CD8-positive, alpha-beta T cell (primary cell): ENCODE measurements at regions of chr2 and their contacts with region 1.

Region 1: GRCh38 chr2:189466660-189467059 is 25.4 kb downstream of the WDR75 start:
- DNase-seq: peak in 2 of 9 experiments; percentile 14 to 26
- ATAC-seq: peak; percentile 51
- H3K4me3 ChIP-seq: no peak overlapping the region
- H3K4me3 Mint-ChIP-seq: no peak overlapping the region
- H3K27ac ChIP-seq: no peak overlapping the region
- H3K27ac Mint-ChIP-seq: no peak overlapping the region
- H3K4me1 ChIP-seq: no peaks in the 10 kb centered on the region
- H3K4me1 Mint-ChIP-seq: no peaks in the 10 kb centered on the region
- H3K27me3 ChIP-seq: no peaks in the 10 kb centered on the region
- H3K27me3 Mint-ChIP-seq: no peaks in the 10 kb centered on the region
- CTCF ChIP-seq: no peak

Region 2: DNA sequence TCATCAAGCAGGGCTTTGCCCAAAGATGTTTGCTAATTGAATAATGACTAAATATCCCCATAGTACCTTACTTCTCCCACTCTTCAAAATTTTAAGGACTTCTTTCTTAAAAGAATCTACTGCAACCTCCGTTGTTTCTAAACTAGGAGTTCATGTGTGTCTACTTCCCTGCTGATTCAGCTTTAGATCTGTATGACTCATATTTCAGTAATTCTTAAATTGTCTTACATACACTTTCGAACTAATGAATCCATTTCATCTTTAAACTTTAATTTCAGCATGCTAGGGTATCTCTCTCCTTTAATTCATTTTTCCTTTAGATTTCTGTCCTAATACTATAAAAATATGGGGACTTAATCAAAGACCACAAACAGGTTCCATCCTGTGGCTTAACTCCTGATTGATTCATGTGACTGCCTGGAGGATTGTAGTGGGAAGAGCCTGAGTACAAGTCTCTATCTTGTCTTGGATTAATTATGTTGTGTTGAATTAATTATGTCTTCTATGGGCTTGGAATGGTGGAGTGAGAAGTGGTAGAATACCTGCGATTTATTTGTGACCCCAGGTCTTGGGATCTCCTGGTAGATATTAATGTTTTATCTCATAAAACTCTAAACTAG is 262.2 kb before region 1 on chr2:
- CTCF ChIA-PET with region 1: no interaction called
- POLR2A ChIA-PET with region 1: no interaction called
- intact Hi-C with region 1: no loop called
- DNase-seq: no peak
- ATAC-seq: no peak
- H3K4me3 ChIP-seq: no peak overlapping the region
- H3K4me3 Mint-ChIP-seq: no peak overlapping the region
- H3K27ac ChIP-seq: no peak overlapping the region
- H3K27ac Mint-ChIP-seq: no peak overlapping the region
- H3K4me1 ChIP-seq: no peaks in the 10 kb centered on the region
- H3K4me1 Mint-ChIP-seq: no peaks in the 10 kb centered on the region
- H3K27me3 ChIP-seq: no peaks in the 10 kb centered on the region
- H3K27me3 Mint-ChIP-seq: peaks cover 3% of the 10 kb centered on the region
- CTCF ChIP-seq: no peak

Region 3: GRCh38 chr2:189633392-189633811 is 166.7 kb after region 1 on chr2:
- CTCF ChIA-PET with region 1: no interaction called
- POLR2A ChIA-PET with region 1: no interaction called
- intact Hi-C with region 1: loop called (anchors 2 to 5 kb)
- DNase-seq: peak in 2 of 9 experiments; percentile 10 to 37
- ATAC-seq: no peak
- H3K4me3 ChIP-seq: no peak overlapping the region
- H3K4me3 Mint-ChIP-seq: no peak overlapping the region
- H3K27ac ChIP-seq: no peak overlapping the region
- H3K27ac Mint-ChIP-seq: no peak overlapping the region
- H3K4me1 ChIP-seq: no peaks in the 10 kb centered on the region
- H3K4me1 Mint-ChIP-seq: no peaks in the 10 kb centered on the region
- H3K27me3 ChIP-seq: no peaks in the 10 kb centered on the region
- H3K27me3 Mint-ChIP-seq: no peaks in the 10 kb centered on the region
- CTCF ChIP-seq: no peak

Region 4: DNA sequence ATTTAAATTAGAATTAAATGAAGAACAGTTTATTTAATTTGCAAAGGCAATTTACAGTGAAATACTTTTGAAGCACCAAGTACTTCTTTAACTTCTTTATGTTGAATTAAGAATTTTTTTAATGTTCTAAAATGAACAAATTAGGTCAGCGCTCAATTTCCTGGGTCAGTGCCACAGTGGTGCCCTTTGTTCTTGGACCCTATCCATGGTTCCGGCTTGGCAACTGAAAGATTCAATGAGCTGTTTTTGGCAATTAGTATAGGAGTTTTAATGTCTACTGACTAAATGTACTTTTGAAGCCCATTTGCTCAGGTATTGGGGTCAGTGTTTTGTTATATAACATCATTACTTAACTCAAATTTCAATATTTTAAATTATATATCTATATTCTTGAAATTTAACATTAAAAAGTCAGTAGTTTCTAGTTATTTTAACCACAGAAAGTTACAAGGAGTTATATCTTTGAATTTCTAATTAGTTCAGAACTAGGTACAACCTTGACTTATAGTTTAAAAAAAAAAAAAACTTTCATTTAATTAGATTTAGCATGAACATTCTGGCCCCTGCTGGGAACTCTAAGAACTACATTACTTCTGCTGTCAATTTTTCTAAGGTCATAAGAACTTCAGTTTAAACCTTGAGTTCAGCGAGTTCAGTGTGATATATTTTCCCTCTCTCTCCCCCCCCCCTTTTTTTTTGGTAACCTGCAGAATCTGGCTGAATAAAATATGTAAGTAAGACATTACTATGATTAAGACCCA is 603.5 kb after region 1 on chr2:
- CTCF ChIA-PET with region 1: no interaction called
- POLR2A ChIA-PET with region 1: no interaction called
- intact Hi-C with region 1: loop called in 1 of 2 experiments (anchors 5 kb)
- DNase-seq: peak in 3 of 9 experiments; percentile 14 to 61 (median 56)
- ATAC-seq: peak; percentile 75
- H3K4me3 ChIP-seq: no peak overlapping the region
- H3K4me3 Mint-ChIP-seq: no peak overlapping the region
- H3K27ac ChIP-seq: no peak overlapping the region
- H3K27ac Mint-ChIP-seq: no peak overlapping the region
- H3K4me1 ChIP-seq: no peaks in the 10 kb centered on the region
- H3K4me1 Mint-ChIP-seq: no peaks in the 10 kb centered on the region
- H3K27me3 ChIP-seq: no peaks in the 10 kb centered on the region
- H3K27me3 Mint-ChIP-seq: peaks cover 2% of the 10 kb centered on the region
- CTCF ChIP-seq: peak; percentile 53